Head of caudate nucleus (tissue), 42 donors: ENCODE measurements at regions of chr12 and their contacts with region 1.

Region 1: DNA sequence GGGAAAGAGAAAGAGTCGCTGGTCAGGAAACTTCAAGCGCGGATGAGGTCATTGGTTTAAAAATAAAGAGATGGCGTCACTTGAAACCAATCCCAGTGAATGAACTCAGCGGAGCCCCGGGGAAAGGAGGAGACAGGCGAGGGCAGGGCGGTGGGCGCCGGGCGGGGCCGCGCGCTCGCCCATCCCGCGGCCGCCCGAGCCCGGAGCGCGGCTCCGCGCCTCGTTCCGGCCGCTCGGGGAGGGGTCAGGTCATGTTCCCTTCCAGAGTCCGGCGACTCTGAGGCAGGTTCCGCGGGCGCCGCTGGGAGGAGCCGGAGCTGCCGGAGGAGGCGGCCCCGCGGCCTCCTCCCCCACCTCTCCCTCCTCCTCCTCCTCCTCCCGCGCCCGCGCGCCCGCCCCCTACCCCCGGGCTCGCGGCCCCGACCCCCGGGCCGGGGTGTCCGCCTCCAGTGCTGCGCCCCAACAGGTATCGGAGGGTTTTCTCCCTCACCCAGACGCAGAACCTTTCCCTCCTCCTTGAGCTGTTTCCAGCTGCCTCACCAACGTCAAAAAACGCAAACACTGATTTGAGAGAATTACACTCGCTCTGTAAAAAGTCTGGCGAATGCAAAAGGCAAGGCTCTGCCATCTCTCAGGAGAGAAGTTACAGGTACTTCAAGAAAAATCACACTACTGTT is at the start of gene DUSP16:
- DNase-seq: peak; percentile 78 to 97 (median 92)

Region 2: DNA sequence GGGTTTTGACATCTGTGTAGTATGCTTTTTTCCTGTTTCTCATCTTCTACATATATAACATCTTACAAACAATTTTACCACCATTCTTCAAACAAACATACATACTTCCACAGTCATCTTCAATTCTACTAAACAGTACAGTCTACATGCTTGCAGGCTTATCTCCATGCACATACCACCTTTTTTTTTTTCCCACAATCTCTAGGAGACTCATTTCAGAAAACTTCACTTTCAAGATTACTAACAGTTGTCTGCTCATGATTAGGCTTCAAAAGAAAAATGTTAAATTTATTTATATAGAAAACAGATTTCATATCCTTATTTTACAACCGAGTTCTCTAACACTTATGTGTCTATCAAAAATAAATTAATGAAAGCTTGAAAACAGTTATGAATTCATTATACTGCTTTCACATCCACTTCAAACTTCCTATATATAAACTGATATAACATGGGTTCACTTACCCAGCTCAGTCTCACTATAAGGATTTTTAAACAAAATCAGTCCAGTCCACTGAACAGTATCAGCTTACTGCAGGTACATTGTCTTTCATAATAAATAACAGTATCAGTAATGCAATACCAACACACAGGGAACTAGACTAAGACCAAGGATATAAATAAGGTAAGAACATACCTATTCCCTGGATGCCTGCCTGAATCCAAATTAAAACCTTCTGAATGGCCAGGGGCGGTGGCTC is 338.3 kb before region 1 on chr12:
- intact Hi-C with region 1: no loop called
- DNase-seq: no peak

Region 3: GRCh38 chr12:12376646-12377448 is 185.9 kb before region 1 on chr12:
- intact Hi-C with region 1: loop called (anchors 2 kb)
- DNase-seq: peak in 7 of 42 donors; percentile 22 to 66 (median 49)

Region 4: GRCh38 chr12:12474931-12475795 is 87.6 kb before region 1 on chr12:
- intact Hi-C with region 1: loop called (anchors 5 kb)
- DNase-seq: no peak

Region 5: DNA sequence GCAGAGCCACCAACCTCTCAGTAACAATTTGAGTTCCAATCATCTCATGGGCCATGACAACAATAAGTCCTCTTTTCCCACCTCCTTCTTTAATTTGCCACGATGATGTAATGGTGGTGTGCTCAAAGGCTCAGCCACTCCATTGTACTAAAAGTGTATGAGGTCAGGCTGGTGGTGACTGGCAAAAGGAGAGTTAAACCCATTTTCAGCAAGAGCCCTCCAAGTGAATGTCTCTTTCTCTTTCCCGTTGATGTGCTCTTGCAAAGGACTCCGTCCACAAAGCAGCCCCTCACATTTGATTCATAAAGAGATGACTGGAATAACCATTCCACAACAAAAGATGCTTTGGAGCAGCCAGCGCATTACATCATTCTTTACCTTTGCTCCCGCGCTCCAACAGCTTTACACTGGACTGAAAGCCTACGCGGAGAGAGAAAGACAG is 41.7 kb before region 1 on chr12:
- intact Hi-C with region 1: loop called (anchors 5 kb)
- DNase-seq: peak in 17 of 42 donors; percentile 15 to 73 (median 34)

Region 6: GRCh38 chr12:12600255-12601034 is 37.7 kb after region 1 on chr12:
- intact Hi-C with region 1: no loop called
- DNase-seq: peak in 19 of 42 donors; percentile 10 to 55 (median 30)

Region 7: DNA sequence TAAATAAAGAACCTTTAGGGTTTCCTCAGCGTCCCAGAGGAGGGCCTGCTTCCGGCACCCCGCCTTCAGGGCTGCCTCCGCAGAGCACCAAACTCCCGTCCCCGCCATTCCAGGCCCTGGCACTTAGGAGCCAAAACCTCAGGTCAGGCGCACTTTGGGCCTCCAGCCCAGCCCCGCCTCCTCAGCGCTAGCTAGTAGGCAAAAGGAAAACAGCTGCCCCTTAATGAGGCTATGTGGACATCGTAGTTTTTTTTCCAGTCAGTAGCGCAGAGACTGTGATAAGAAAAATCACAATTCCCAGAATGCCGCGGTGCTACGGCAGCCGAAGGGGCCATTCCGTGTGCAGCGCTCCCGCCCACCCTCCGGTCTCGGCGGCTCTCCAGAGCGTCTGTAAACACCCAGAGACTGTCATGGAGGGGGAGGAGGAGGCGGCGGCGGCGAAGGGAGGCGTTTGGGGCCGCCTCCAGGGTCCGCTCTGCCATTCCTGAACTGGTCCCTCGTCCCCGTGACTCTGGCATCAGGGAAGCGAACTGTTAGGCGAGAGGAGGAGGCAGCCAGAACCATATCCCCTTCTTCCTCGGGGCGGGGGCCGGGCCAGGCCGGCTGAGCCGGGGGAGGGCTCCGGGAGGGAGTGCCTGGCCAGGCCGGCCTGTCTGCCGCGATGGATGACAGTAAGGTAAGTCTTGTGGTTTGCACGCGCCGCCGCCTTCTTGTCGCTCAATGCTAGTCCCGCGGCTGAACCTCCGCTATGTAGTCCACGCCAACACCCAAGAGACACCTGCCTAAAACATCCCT is 49.0 kb after region 1 on chr12 and contains the start of gene CREBL2:
- intact Hi-C with region 1: loop called (anchors 5 kb)
- DNase-seq: peak; percentile 85 to 97 (median 92)

Region 8: DNA sequence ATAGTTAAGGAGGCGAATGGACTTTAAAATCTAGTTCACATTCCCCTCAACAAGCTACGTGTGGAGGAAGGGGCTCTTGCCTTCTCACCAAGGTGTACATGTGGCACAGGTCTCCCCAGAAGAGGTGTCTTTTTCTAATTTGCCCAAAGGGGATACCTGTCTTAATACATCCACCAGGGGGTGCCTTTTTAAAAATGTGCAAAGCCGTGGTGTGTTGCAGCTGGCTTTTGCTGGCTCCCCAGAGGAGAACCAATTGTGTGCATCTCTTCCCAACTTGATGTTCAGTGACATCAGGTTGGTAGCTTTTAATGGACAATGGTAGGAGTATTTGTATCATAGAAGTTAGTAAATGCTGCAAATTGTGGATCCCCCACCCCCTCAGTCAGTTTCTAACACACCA is 82.8 kb after region 1 on chr12:
- intact Hi-C with region 1: no loop called
- DNase-seq: peak in 1 of 42 donors; percentile 24

Region 9: GRCh38 chr12:12696562-12697383 is 134.1 kb after region 1 on chr12:
- intact Hi-C with region 1: loop called (anchors 5 kb)
- DNase-seq: peak; percentile 85 to 96 (median 91)

Region 10: GRCh38 chr12:12716793-12717585 is 154.3 kb after region 1 on chr12 and contains the start of gene CDKN1B:
- intact Hi-C with region 1: loop called (anchors 5 kb)
- DNase-seq: peak; percentile 86 to 97 (median 92)